Activated naive CD4-positive, alpha-beta T cell treated with anti-CD3 and anti-CD28 coated beads, Interleukin-2, amount 10 ng/mL, durations not matched to agents 7 days and 5 days (primary cell): ENCODE measurements at regions of chr15 and their contacts with region 1.

Region 1: DNA sequence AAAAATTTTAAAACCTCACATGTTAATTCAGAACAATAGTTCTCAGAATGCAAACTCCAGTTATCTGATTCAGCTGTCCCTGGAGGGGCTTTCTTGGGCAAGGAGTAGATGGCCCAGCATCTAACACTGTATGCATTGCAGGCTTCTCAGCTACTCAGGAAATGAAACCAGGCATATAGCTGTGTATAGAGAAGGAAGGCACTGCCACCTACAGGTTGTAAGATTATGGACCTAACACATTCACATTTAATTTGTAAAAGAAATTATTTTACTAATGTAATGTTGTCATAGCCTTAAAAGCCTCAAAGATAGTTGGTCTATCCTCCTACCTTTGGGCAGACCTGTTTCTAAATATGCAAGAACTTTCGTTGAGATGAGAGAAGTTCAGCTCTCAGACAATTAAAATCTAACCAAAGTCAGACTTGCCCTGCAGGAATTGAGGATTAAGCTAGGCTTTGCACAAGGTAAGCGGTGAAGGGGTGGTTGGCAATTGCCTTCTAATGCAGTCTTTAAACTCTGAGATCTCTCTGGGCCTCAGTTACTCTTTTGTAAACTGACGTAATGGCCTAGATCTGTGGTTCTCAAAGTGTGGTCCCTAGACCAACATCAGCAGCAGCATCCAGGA is 132.8 kb upstream of the SLC24A5 start:
- DNase-seq: peak; percentile 23
- H3K4me3 Mint-ChIP-seq: no peak overlapping the region
- H3K27ac Mint-ChIP-seq: no peak overlapping the region
- H3K4me1 Mint-ChIP-seq: no peaks in the 10 kb centered on the region
- H3K27me3 Mint-ChIP-seq: no peaks in the 10 kb centered on the region

Region 2: DNA sequence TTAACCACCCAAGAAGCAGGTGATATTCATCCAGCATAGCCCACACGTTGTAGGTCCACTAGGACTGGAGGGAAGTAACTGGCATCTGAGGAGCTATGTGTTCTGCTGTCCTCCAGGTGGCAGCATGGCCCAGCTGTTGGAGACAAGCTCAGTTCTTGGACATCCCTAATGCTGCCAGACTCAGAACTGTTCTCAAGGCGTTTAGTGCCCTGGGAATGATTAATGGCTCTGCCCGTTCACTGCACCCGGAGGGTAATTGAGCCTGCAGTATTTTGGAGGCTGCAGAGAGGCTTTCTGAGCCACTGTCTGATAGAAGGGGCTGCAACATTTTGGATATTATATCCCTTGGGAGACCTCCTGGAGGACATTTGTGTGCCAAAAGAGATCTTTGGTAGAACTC is 792.0 kb before region 1 on chr15:
- CTCF ChIA-PET with region 1: interaction called, 31 read pairs
- DNase-seq: peak; percentile 58
- H3K4me3 Mint-ChIP-seq: no peak overlapping the region
- H3K27ac Mint-ChIP-seq: no peak overlapping the region
- H3K4me1 Mint-ChIP-seq: no peaks in the 10 kb centered on the region
- H3K27me3 Mint-ChIP-seq: peaks cover 4% of the 10 kb centered on the region

Region 3: GRCh38 chr15:47711654-47712053 is 276.4 kb before region 1 on chr15:
- CTCF ChIA-PET with region 1: interaction called, 15 read pairs
- DNase-seq: no peak
- H3K4me3 Mint-ChIP-seq: no peak overlapping the region
- H3K27ac Mint-ChIP-seq: no peak overlapping the region
- H3K4me1 Mint-ChIP-seq: no peaks in the 10 kb centered on the region
- H3K27me3 Mint-ChIP-seq: peaks cover 17% of the 10 kb centered on the region

Region 4: GRCh38 chr15:47908950-47909670 is 78.9 kb before region 1 on chr15:
- CTCF ChIA-PET with region 1: interaction called, 11 read pairs
- DNase-seq: no peak
- H3K4me3 Mint-ChIP-seq: no peak overlapping the region
- H3K27ac Mint-ChIP-seq: no peak overlapping the region
- H3K4me1 Mint-ChIP-seq: no peaks in the 10 kb centered on the region
- H3K27me3 Mint-ChIP-seq: no peaks in the 10 kb centered on the region

Region 5: DNA sequence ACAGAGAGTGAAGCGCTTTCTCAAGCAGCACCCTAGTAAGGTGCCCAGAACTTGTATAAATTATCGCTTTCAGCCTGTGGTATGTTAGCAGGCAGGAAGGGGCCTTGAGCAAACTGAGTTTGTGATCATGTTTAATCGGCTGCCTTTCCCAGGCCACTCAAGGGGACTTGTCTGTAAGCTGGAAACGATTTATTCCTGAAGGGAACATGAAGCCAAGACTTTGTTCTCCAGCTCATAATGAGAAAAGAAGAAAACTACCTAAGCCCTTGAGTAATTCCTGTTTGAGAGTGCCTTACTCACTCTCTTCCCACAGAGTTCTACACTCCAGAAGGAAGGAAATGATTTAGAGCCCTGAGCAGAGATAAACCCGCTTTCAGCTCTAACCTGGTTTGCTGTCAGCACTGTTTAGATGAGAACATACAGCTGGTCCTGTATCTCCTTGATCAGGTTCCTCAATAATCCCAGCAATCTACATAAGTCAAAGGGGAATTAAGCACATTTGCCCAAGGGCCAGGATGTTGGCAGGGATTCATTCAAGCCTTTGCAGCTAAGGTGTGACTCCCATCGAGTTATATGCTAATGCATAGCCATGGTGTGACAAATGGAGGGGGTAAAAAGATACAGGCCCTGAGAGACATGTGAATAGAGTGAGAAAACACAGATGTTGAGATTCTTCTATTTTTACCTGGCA is 54.9 kb before region 1 on chr15:
- CTCF ChIA-PET with region 1: no interaction called
- DNase-seq: no peak
- H3K4me3 Mint-ChIP-seq: no peak overlapping the region
- H3K27ac Mint-ChIP-seq: no peak overlapping the region
- H3K4me1 Mint-ChIP-seq: no peaks in the 10 kb centered on the region
- H3K27me3 Mint-ChIP-seq: no peaks in the 10 kb centered on the region